PC-3 (cell line): ENCODE measurements at regions of chr11 and their contacts with region 1.

Region 1: DNA sequence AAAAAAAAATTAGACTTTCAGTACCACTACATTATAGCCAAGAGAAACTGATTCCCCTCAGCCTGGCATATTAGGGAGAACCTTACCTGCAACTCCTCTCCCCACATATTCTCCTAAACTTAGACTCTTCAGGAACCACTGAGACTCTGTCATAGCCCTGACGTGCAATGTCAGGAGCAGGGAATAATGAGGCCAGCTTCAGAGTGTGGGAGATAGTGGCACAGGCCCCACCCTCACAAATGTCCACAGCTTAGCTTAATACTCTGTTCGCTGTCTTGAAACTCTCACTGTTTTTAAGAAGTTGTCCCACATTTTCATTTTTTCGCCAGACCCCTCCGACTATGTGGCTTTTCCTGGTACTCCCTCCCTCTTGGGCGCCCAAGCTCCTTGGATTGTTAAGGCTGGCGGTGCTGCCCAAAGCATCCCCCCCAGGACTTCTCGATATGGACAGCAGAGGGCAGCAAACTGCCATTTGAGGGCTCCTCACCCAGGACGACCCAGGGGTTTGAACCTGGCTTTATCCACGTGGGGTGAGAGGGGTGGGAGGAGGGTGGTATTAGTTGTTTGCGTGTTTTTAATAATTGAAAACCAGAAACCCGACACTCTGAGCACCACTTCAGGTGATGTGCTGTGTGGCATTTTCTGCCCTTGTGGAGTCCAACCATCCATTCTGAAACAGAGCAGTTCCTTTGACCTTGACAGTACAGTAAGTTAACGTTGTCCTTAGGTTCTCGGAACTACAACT is 45.2 kb upstream of the RASSF10 start:
- DNase-seq: peak; percentile 80
- ATAC-seq: peak; percentile 93
- H3K4me3 ChIP-seq: no peak overlapping the region
- H3K27ac ChIP-seq: no peak overlapping the region
- H3K4me1 ChIP-seq: peaks cover 18% of the 10 kb centered on the region
- H3K27me3 ChIP-seq: no peaks in the 10 kb centered on the region
- CTCF ChIP-seq: peak; percentile 94

Region 2: GRCh38 chr11:12288212-12288930 is 675.6 kb before region 1 on chr11:
- CTCF ChIA-PET with region 1: interaction called, 3 read pairs
- POLR2A ChIA-PET with region 1: no interaction called
- intact Hi-C with region 1: loop called (anchors 5 kb)
- DNase-seq: peak; percentile 94
- ATAC-seq: peak; percentile 23
- H3K4me3 ChIP-seq: peak overlapping the region; percentile 54
- H3K27ac ChIP-seq: peak overlapping the region; percentile 99
- H3K4me1 ChIP-seq: peaks cover 54% of the 10 kb centered on the region
- H3K27me3 ChIP-seq: no peaks in the 10 kb centered on the region
- CTCF ChIP-seq: peak; percentile 92

Region 3: GRCh38 chr11:12411806-12412727 is 551.9 kb before region 1 on chr11:
- CTCF ChIA-PET with region 1: no interaction called
- POLR2A ChIA-PET with region 1: no interaction called
- intact Hi-C with region 1: loop called (anchors 2 kb)
- DNase-seq: peak; percentile 79
- ATAC-seq: peak; percentile 87
- H3K4me3 ChIP-seq: no peak overlapping the region
- H3K27ac ChIP-seq: peak overlapping the region; percentile 6
- H3K4me1 ChIP-seq: peaks cover 14% of the 10 kb centered on the region
- H3K27me3 ChIP-seq: no peaks in the 10 kb centered on the region
- CTCF ChIP-seq: peak; percentile 84

Region 4: DNA sequence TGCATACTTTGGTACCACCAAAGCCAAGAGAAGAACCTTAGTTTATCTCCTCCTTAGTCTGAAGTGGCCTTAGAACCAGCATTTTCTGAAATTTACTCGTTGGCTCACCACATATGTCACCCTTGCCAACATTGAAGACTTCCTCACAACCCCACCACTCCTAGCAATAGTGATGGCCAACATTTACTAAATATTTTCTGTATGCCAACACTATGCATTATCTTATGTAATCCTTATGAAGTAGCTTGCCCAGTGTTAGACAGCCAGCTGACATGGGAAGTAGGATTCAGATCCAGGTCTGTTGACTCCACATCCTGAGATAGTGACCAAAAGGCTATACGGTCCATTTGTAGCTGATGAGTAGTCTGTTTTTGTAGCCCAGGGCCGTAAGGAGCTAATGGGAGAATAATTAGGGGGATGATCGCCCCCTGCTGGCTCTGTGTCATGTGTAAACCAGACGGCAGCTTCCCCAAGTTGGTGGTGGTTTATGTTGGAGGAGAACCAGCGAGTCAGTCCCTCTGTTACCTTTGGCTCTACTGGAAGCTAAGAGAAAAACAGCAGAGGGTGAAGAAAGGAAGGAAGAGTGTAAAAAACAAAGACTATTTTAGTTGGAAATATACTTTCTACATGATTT is 75.3 kb before region 1 on chr11:
- CTCF ChIA-PET with region 1: interaction called, 15 read pairs
- POLR2A ChIA-PET with region 1: no interaction called
- intact Hi-C with region 1: no loop called
- DNase-seq: peak; percentile 82
- ATAC-seq: peak; percentile 88
- H3K4me3 ChIP-seq: no peak overlapping the region
- H3K27ac ChIP-seq: no peak overlapping the region
- H3K4me1 ChIP-seq: 0 out of 2 replicates have a peak, but pooled peaks cover 4% of the 10 kb centered on the region
- H3K27me3 ChIP-seq: no peaks in the 10 kb centered on the region
- CTCF ChIP-seq: peak; percentile 87

Region 5: DNA sequence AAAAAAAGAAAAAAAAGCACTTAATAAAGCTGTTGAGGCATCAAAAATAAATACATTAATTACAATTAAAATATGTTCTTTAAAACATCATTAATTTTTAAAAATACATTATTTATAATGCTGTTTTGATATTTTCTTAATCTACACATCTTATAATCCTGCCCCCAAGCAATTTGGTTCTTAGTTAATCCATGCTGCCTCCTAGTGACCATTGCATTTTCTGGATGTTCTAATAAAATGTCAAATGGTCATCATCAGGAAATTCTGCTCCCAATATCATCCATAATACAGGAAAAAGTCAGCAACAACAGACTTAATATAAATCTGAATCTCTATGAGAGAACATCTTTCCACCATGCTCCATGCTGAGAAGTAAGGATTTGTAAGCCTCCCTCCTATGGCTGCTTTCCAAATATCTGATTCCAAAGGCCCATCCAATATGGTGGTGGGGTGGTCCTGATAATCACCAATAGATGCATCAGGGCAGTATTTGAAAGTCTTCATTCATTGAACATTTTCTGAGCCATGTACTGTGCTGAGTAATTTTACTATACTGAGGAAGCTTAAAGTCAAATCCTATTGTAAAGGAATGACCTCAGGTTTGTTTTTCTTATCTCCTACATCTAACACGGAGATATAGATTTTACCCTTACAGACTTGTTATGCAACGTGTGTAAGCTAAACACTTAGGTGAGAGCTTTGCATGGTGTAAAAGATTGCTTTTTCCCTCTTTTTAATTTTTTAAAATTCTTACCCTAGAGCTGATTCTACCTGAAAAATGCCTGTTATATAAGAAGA is 189.0 kb after region 1 on chr11:
- CTCF ChIA-PET with region 1: interaction called, 9 read pairs
- POLR2A ChIA-PET with region 1: no interaction called
- intact Hi-C with region 1: loop called (anchors 1 kb)
- DNase-seq: peak; percentile 60
- ATAC-seq: no peak
- H3K4me3 ChIP-seq: no peak overlapping the region
- H3K27ac ChIP-seq: no peak overlapping the region
- H3K4me1 ChIP-seq: peaks cover 3% of the 10 kb centered on the region; the same call in 1 of the 2 replicates
- H3K27me3 ChIP-seq: no peaks in the 10 kb centered on the region
- CTCF ChIP-seq: peak; percentile 70

Region 6: GRCh38 chr11:13335319-13335718 is 371.4 kb after region 1 on chr11:
- CTCF ChIA-PET with region 1: interaction called, 3 read pairs
- POLR2A ChIA-PET with region 1: no interaction called
- intact Hi-C with region 1: loop called (anchors 10 kb)
- DNase-seq: peak; percentile 67
- ATAC-seq: no peak
- H3K4me3 ChIP-seq: no peak overlapping the region
- H3K27ac ChIP-seq: no peak overlapping the region
- H3K4me1 ChIP-seq: peaks cover 76% of the 10 kb centered on the region
- H3K27me3 ChIP-seq: no peaks in the 10 kb centered on the region
- CTCF ChIP-seq: peak; percentile 86